ENCODE measurements at regions of chr20 and their contacts with region 1.

Region 1: GRCh38 chr20:31560094-31560899 is 44.8 kb upstream of the ID1 start:
- DNase-seq: peak; percentile 87
- H3K4me3 Mint-ChIP-seq: no peak overlapping the region
- H3K27ac Mint-ChIP-seq: peak overlapping the region; percentile 66
- H3K4me1 Mint-ChIP-seq: peaks cover 15% of the 10 kb centered on the region
- H3K27me3 Mint-ChIP-seq: no peaks in the 10 kb centered on the region

Region 2: GRCh38 chr20:31406115-31406514 is 154.2 kb before region 1 on chr20 and contains the start of gene DEFB121:
- CTCF ChIA-PET with region 1: no interaction called
- POLR2A ChIA-PET with region 1: no interaction called
- intact Hi-C with region 1: no loop called
- DNase-seq: no peak
- H3K4me3 Mint-ChIP-seq: no peak within 1 kb of the TSS
- H3K27ac Mint-ChIP-seq: no peak within 1 kb of the TSS
- H3K4me1 Mint-ChIP-seq: no peaks in the 10 kb centered on the region
- H3K27me3 Mint-ChIP-seq: peaks cover 8% of the 10 kb centered on the region
- total RNA-seq, gene DEFB121: not detected

Region 3: DNA sequence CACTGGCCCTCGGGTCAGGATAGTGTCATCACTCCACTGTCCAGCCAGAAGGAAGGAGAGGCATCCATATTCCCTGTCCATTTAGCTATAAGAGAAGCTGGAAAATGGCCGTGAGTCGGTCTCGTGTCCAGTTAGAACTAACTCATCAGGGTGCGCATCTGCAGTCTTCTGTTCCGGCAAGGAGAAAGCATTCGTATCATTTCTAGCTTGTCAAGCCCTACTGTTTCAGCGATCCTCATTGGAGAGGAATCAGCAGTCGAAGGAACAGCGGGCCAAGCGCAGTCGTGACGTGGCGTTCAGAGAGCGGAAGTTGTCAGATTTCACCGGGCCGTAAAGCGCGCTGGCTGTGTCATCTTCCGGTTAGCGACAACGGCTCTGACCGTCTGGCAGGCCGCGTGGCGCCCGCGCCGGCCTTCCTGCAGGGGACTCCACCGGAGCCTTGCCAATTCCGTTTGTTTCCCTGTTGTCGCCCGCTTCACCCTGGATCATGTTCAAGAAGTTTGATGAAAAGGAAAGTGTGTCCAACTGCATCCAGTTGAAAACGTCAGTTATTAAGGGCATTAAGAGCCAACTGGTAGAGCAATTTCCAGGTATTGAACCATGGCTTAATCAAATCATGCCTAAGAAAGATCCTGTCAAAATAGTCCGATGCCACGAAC is 13.2 kb before region 1 on chr20:
- CTCF ChIA-PET with region 1: interaction called, 32 read pairs
- POLR2A ChIA-PET with region 1: no interaction called
- intact Hi-C with region 1: no loop called
- DNase-seq: peak; percentile 90
- H3K4me3 Mint-ChIP-seq: peak overlapping the region; percentile 94
- H3K27ac Mint-ChIP-seq: peak overlapping the region; percentile 98
- H3K4me1 Mint-ChIP-seq: peaks cover 34% of the 10 kb centered on the region
- H3K27me3 Mint-ChIP-seq: no peaks in the 10 kb centered on the region

Region 4: GRCh38 chr20:31572701-31573554 is 12.6 kb after region 1 on chr20:
- CTCF ChIA-PET with region 1: interaction called, 149 read pairs
- POLR2A ChIA-PET with region 1: interaction called, 4 read pairs
- intact Hi-C with region 1: loop called (anchors 1 kb)
- DNase-seq: peak; percentile 94
- H3K4me3 Mint-ChIP-seq: peak overlapping the region; percentile 88
- H3K27ac Mint-ChIP-seq: peak overlapping the region; percentile 85
- H3K4me1 Mint-ChIP-seq: peaks cover 25% of the 10 kb centered on the region
- H3K27me3 Mint-ChIP-seq: no peaks in the 10 kb centered on the region

Region 5: DNA sequence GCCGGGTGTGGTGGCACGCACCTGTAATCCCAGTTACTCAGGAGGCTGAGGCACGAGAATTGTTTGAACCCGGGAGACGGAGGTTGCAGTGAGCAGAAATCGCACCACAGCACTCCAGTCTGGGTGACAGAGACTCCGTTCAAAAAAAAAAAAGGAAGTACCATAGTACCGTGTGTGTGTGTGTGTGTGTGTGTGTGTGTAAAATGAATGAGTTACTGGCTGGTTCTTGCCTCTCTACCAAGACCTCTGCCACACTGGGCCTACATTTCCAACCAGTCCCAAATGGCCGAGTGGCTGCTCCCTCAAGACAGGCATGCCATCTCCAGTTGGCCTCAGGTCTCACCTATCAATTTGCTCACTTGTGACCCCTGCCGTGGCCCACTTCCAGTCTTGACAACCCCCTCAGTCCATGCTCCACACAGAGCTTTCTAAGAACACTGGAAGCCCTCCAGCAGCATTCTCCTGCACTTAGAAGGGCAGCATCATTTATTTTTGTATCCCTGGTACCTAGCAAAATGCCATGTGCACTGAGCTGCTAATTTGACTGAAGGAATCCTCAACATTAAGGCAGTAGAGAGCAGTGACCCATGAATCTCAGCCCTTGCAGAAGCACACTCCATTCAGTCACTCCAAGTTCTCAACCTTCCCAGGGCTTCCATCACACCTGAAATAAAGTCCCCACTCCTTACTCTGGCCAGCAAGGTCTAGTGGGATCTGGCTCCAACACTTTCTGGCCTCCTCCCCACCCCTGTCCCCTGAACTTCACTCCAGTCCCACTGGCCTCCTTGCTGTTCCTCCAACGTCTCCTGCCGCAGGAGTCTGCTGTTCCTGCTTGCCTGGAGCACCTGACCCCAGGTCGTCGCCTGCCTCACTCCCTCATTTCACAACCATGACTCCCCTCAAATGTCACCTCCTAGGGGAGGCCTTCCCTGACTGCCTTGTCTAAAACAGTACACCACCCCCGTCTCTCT is 107.3 kb after region 1 on chr20:
- CTCF ChIA-PET with region 1: no interaction called
- POLR2A ChIA-PET with region 1: no interaction called
- intact Hi-C with region 1: no loop called
- DNase-seq: no peak
- H3K4me3 Mint-ChIP-seq: no peak overlapping the region
- H3K27ac Mint-ChIP-seq: peak overlapping the region; percentile 70
- H3K4me1 Mint-ChIP-seq: peaks cover 65% of the 10 kb centered on the region
- H3K27me3 Mint-ChIP-seq: no peaks in the 10 kb centered on the region

Region 6: DNA sequence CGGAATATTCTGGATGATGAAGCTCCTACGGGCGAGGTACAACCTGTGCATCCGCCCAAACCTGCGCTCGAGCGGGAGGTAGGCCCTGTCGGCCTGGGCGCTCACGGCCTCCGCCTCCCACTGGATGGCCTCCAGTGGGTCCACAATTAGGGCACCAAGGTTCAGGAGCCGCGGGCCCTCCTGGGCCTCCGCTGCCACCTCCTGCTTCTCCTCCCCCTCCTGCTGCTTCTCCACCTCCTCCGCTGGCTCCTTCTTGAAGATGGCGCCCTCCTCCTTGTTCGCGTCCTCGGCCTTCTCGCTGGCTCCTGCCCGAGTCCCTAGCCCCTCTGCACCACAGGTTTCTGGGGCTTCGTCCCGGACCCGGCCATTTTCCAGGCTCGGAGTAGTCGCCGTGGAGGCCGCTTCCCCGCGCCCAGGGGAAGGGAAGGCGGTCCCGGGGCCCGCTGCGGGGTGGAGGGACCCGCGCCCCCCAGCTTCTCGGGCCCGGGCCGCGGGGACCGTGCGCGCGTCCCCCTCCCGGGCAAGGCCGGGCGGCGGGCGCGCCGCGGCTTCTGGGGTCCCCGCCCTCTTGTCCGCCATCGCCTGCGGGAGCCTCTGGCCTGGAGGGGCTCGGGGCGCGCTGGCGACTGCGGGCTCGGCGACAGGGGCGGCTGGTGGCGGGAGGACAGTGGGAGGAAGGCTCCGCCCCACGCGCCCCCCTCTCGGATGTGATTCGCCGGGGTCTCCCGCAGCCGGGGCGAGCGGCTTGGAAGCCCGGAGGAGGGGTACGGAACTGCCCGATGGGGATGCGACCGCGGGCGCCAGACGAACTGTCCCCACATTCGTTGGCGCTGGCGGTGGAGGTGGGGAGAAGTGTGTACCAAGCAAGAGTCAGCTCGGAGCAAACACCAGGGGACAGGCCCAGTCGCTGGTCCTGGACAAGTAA is 629.7 kb after region 1 on chr20:
- CTCF ChIA-PET with region 1: no interaction called
- POLR2A ChIA-PET with region 1: no interaction called
- intact Hi-C with region 1: no loop called
- DNase-seq: peak; percentile 68
- H3K4me3 Mint-ChIP-seq: peak overlapping the region; percentile 71
- H3K27ac Mint-ChIP-seq: peak overlapping the region; percentile 54
- H3K4me1 Mint-ChIP-seq: peaks cover 43% of the 10 kb centered on the region
- H3K27me3 Mint-ChIP-seq: no peaks in the 10 kb centered on the region

Measured in activated CD4-positive, alpha-beta memory T cell treated with anti-CD3 and anti-CD28 coated beads for 36 hours (primary cell).